Mucosa of descending colon (tissue), 3 donors: ENCODE measurements at regions of chr6 and their contacts with region 1.

Region 1: GRCh38 chr6:30541515-30542403 is 14.5 kb downstream of the GNL1 start:
- DNase-seq: peak; percentile 79 to 85 (median 85)
- ATAC-seq: peak; percentile 92
- H3K4me3 ChIP-seq: no peak overlapping the region
- H3K4me1 ChIP-seq: peaks cover 5% of the 10 kb centered on the region
- CTCF ChIP-seq: peak; percentile 95

Region 2: DNA sequence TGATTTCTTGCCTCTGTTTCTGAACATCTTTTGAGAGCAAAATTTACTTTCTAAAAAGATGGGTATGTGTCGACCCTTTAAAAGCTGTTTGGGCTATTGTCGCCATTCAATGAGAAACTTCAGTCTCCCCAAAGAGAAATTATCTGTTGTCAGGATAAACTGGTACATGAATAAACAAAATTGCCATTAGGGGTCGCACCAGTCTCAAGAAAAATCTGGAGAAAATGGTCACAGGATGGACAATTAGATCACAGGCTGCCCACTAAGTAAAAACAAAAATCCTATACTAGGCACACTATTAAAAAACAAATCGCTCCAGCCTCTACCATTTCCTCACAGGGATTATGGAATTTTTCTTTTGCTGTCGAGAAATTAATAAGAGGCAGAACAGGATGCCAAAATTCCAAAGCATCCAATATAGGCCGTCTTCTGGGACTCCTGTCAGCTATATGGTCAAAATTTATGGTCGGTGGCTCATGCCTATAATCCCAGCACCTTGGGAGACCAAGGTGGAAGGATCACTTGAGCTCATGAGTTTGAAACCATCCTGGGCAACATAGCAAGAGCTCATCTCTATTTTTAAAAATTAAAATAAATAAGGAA is 58.0 kb before region 1 on chr6:
- intact Hi-C with region 1: loop called (anchors 5 kb)
- DNase-seq: peak in 1 of 3 donors; percentile 85
- ATAC-seq: peak; percentile 39
- H3K4me3 ChIP-seq: no peak overlapping the region
- H3K4me1 ChIP-seq: no peaks in the 10 kb centered on the region
- CTCF ChIP-seq: no peak